PC-9 (cell line): ENCODE measurements at regions of chr13 and their contacts with region 1.

Region 1: DNA sequence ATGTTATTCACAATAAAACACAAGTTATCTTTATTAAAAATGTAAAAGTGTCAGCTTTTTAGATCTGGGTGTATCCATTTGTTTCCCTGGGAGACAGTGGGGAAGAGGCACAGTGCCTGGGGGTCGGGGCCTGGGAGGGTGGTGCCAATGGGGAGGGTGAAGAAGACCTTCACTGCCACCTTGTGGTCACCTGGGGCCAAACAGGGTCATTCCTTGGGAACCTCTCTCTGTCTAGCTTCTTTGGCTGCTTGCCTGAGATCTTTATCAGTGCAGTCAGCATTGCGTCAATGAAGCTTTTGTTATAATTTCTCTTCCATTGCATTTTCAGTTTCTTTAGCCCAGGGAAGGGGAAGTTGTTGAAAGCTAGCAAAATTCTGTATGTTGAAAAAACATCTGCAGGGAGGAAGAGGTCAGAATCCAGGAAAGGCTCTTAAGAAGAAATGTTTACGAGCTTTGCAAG is 39.1 kb downstream of the PCDH8 start:
- DNase-seq: peak; percentile 58 to 60
- H3K4me3 ChIP-seq: no peak overlapping the region
- H3K27ac ChIP-seq: no peak overlapping the region
- H3K4me1 ChIP-seq: no peaks in the 10 kb centered on the region
- H3K27me3 ChIP-seq: peaks cover 34% of the 10 kb centered on the region
- CTCF ChIP-seq: peak; percentile 79

Region 2: DNA sequence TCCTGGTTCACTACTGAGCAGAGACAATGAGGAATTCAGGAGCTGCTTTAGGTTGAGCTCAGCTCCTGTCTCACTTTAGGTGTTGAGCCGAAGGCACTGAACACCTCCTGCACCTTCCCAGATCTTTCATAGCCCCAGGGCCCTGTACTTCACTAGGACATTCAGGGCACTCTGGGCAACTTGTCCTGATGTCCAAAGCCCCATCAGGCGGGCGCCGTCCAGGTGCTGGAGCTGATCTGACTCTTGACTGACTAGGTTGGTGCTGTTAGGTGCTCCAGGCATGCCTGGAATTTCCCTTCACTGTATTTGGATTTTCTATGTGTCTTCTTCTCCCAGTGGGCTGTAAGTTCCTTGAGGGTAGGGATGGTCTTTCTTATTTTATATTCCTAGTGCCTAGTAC is 21.3 kb before region 1 on chr13:
- CTCF ChIA-PET with region 1: no interaction called
- POLR2A ChIA-PET with region 1: no interaction called
- intact Hi-C with region 1: no loop called
- DNase-seq: no peak
- H3K4me3 ChIP-seq: no peak overlapping the region
- H3K27ac ChIP-seq: no peak overlapping the region
- H3K4me1 ChIP-seq: no peaks in the 10 kb centered on the region
- H3K27me3 ChIP-seq: peaks cover 61% of the 10 kb centered on the region
- CTCF ChIP-seq: no peak

Region 3: DNA sequence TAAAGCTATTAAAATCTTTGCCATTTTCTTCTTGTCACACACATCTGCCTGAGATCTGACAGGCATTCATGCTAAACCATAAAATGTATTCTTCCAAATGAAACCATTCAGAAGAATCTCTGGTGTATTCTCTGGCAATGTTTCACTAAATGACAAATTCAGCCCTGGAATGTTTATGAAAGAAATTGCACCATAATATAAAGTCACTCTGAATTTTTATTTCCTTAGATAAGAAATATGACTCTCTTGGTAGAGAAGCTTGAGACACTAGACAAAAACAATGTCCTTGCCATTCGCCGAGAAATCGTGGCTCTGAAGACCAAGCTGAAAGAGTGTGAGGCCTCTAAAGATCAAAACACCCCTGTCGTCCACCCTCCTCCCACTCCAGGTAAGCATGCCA is 233.5 kb after region 1 on chr13:
- CTCF ChIA-PET with region 1: interaction called, 16 read pairs
- POLR2A ChIA-PET with region 1: no interaction called
- intact Hi-C with region 1: no loop called
- DNase-seq: no peak
- H3K4me3 ChIP-seq: no peak overlapping the region
- H3K27ac ChIP-seq: no peak overlapping the region
- H3K4me1 ChIP-seq: no peaks in the 10 kb centered on the region
- H3K27me3 ChIP-seq: peaks cover 7% of the 10 kb centered on the region; the same call in 1 of the 2 replicates
- CTCF ChIP-seq: no peak